ENCODE measurements at regions of chr16 and their contacts with region 1.

Region 1: GRCh38 chr16:4402439-4403132 is 13.8 kb downstream of the CORO7 start:
- DNase-seq: peak; percentile 86
- ATAC-seq: peak; percentile 92 to 97

Region 2: GRCh38 chr16:4183237-4184036 is 219.1 kb before region 1 on chr16:
- intact Hi-C with region 1: loop called in 1 of 2 experiments (anchors 5 kb)
- DNase-seq: peak; percentile 94
- ATAC-seq: peak; percentile 97

Region 3: GRCh38 chr16:4200000-4200780 is 202.4 kb before region 1 on chr16:
- intact Hi-C with region 1: loop called in 1 of 2 experiments (anchors 5 kb)
- DNase-seq: peak; percentile 59
- ATAC-seq: peak; percentile 86 to 87

Region 4: GRCh38 chr16:4261557-4262172 is 140.9 kb before region 1 on chr16:
- intact Hi-C with region 1: loop called in 1 of 2 experiments (anchors 10 kb)
- DNase-seq: no peak
- ATAC-seq: no peak

Region 5: GRCh38 chr16:4288148-4288921 is 114.3 kb before region 1 on chr16:
- intact Hi-C with region 1: loop called in 1 of 2 experiments (anchors 10 kb)
- DNase-seq: peak; percentile 81
- ATAC-seq: peak; percentile 76 to 82

Region 6: GRCh38 chr16:4358831-4359561 is 43.6 kb before region 1 on chr16:
- intact Hi-C with region 1: loop called (anchors 1 to 2 kb)
- DNase-seq: peak; percentile 65
- ATAC-seq: peak; percentile 67 to 68